Colonic mucosa (tissue), 4 donors: ENCODE measurements at regions of chr16 and their contacts with region 1.

Region 1: DNA sequence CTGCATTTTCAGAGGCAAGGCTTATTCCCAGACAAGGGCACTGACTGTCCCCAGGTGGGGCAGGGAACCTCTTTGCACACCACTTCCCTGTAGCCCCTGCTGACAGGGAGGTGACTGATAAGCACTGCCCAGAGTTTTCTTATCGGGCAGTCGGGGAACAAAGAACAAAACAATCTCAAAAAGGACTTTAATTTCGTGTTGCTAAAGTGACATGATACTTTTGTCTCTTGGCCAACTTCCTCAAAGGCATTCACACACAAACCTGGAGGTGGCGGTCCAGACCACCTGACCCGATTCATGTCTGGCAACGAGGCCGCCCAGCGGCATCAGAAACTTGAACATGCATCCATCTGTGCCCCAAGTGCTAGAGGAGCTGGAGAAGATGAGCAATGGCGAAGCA is 28.9 kb downstream of the ZDHHC7 start:
- DNase-seq: peak; percentile 71
- H3K4me3 ChIP-seq: no peak overlapping the region
- H3K27ac ChIP-seq: peak overlapping the region; percentile 11
- H3K4me1 ChIP-seq: peaks cover 9% of the 10 kb centered on the region
- H3K27me3 ChIP-seq: no peaks in the 10 kb centered on the region
- CTCF ChIP-seq: peak; percentile 35

Region 2: DNA sequence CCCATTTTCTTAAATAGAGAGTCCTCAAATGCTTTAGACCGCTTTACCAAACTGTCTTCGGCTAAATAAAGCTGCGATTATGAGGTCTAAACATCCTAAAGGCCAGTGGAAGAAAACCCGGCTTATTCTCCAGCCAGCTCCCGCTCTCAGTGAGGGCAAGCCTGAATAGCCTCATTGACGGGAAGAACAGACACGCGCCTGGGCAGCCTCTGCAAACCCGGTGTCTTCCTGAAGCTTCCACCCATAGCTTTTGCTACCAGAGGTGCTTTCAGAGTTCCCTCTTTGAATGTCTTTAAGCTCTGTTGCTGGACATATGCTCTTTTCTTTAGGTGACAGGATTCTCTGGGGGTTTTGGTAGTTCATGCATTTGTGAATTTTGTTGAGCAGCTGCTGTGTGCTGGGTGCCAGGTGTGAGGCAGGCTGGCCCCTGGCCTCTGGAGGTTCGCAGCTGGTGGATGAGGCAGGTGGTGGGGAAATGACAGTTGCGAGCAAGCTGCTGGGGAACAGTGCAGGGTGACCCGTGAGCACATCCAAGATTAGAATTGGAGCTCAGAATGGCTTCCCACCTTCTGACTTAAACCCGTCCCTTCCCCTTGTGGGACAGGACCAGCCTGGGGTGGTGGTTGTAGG is 118.0 kb before region 1 on chr16:
- intact Hi-C with region 1: no loop called
- DNase-seq: no peak
- H3K4me3 ChIP-seq: no peak overlapping the region
- H3K27ac ChIP-seq: no peak overlapping the region
- H3K4me1 ChIP-seq: no peaks in the 10 kb centered on the region
- H3K27me3 ChIP-seq: no peaks in the 10 kb centered on the region
- CTCF ChIP-seq: no peak

Region 3: GRCh38 chr16:85086347-85087291 is 104.2 kb after region 1 on chr16:
- intact Hi-C with region 1: loop called (anchors 5 kb)
- DNase-seq: peak; percentile 80
- H3K4me3 ChIP-seq: no peak overlapping the region
- H3K27ac ChIP-seq: no peak overlapping the region
- H3K4me1 ChIP-seq: no peaks in the 10 kb centered on the region
- H3K27me3 ChIP-seq: no peaks in the 10 kb centered on the region
- CTCF ChIP-seq: peak; percentile 59

Region 4: GRCh38 chr16:85461814-85462713 is 479.6 kb after region 1 on chr16:
- intact Hi-C with region 1: no loop called
- DNase-seq: peak; percentile 34
- H3K4me3 ChIP-seq: no peak overlapping the region
- H3K27ac ChIP-seq: no peak overlapping the region
- H3K4me1 ChIP-seq: peaks cover 17% of the 10 kb centered on the region
- H3K27me3 ChIP-seq: peaks cover 27% of the 10 kb centered on the region
- CTCF ChIP-seq: no peak